ENCODE measurements at regions of chr6 and their contacts with region 1.

Region 1: DNA sequence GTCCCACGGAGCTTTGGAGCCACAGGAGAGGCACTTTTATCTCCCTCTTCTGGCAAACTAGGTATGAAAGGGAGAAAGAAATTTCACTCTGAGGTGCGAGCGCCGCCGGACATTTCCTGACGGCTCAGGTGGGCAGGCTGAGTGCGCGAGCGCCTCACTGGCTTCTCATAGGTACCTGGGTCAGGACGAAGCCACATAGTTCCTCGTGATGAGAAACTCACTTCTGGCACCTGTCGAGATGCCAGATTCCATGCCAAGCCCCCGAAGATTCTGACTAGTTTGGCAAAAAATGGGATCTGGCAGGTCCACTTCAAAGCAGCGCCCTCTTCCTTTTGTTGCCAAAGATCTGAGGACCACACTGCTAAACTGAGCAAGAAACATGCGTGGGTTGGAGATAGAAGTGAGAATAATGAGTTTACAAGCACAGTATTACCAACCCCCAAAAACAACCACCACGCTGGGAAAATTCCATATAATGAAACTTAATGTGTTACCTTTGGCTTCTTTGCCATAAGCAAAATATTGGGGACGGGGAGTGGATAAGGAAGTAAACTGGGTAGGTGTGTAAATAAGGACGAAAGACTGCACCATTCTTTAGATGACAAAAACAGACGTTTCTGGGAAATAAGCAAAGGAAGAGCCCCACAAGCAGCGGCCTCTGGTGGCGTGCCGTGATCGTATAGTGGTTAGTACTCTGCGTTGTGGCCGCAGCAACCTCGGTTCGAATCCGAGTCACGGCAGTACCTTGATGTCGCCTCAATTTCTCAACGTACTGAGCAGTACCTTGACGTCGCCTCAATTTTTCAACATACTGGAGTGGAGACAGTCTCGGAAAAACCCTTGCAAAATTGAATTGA is 89.8 kb upstream of the PRSS16 start:
- DNase-seq: peak; percentile 81
- H3K4me3 ChIP-seq: peak overlapping the region; percentile 74
- H3K27ac ChIP-seq: no peak overlapping the region
- H3K4me1 ChIP-seq: 0 out of 2 replicates have a peak, but pooled peaks cover 2% of the 10 kb centered on the region
- H3K27me3 ChIP-seq: no peaks in the 10 kb centered on the region

Region 2: DNA sequence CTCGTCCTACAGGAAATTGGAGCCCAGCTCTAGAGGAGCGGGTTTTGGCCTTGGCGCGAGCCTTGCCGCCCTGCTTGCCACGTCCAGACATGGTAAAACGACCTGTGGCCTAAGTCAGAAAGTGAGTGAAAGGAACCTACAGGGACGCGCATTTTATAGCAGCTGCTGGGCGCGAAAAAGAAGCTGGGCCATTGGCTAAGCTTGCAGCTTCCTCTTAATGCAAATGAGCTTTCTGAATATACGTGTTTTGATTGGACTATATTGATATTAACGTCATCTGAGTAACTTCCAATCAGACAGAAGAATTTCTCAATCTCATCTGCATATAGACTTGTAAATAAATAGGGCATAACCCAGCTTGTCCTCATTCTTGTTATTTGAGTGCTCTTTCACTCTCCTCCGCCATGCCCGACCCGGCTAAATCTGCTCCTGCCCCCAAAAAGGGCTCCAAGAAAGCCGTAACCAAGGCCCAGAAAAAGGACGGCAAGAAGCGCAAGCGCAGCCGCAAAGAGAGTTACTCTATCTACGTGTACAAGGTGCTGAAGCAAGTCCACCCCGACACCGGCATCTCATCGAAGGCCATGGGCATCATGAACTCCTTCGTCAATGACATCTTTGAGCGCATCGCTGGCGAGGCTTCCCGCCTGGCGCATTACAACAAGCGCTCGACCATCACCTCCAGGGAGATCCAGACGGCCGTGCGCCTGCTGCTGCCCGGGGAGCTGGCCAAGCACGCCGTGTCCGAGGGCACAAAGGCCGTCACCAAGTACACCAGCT is 735.6 kb after region 1 on chr6:
- in situ Hi-C with region 1: loop called (anchors 10 kb)
- DNase-seq: peak; percentile 93
- H3K4me3 ChIP-seq: peak overlapping the region; percentile 96
- H3K27ac ChIP-seq: peak overlapping the region; percentile 74
- H3K4me1 ChIP-seq: peaks cover 3% of the 10 kb centered on the region; the same call in 1 of the 2 replicates
- H3K27me3 ChIP-seq: no peaks in the 10 kb centered on the region

Measured in GM23248 (cell line).